Psoas muscle (tissue), 8 donors: ENCODE measurements at regions of chr10 and their contacts with region 1.

Region 1: DNA sequence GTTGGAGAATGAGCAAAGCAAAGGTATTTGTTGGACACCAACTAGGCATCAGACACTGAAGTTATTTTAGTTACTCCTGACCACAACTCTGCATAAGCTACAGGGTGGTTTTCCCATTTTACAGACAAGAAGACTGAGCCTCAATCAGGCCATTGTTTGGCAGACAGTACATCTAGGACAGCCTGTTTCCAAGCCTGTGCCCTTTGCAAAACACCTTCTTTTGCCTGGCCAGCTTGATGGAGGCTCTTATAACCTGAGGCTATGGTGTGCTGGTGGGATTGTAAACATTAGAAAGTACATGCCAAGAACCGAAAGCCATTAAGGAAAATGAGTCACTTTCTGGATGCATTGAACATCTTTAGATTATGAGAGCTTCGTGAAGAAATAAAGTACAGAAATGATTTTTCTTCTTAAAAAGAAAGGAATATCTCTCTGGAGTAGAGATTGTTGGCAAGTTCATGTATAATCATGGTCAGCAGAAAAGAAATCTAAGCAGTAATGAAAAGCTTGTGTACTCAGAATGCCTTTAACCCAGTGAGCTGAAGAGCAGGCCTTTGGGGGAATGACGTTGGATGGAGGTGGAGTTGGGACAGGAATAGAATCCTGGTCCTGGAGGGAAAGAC is 140.6 kb downstream of the KIAA1217 start:
- DNase-seq: no peak
- ATAC-seq: peak in 2 of 4 donors; percentile 10 to 27
- H3K4me3 ChIP-seq: no peak overlapping the region
- H3K27ac ChIP-seq: peak overlapping the region; percentile 58
- H3K4me1 ChIP-seq: peaks cover 39% of the 10 kb centered on the region
- H3K27me3 ChIP-seq: no peaks in the 10 kb centered on the region
- CTCF ChIP-seq: no peak

Region 2: DNA sequence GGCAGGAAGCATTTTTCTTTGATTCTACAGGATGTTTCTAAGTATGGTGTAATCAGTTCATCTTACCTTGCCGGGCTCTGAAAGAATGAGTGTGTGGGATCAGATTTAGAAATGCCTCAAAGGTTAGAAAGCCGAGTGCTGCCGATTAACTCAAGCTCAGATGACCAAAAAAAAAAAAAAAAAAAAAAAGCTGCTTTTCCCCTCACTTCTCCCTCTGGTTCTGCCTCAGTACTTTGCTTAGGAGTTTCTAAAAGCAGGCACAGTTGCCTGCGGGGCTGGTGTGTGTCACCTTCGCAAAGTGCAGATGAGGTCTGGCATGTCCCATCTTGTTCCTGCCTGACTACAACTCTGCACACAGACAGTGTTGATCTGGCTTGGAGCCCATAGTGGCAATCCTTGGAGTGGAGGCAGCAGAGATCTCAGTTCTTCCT is 93.6 kb before region 1 on chr10:
- intact Hi-C with region 1: loop called in 1 of 2 experiments (anchors 10 kb)
- DNase-seq: peak; percentile 57 to 78
- ATAC-seq: peak; percentile 69 to 86 (median 74)
- H3K4me3 ChIP-seq: peak overlapping the region; percentile 44
- H3K27ac ChIP-seq: peak overlapping the region; percentile 87
- H3K4me1 ChIP-seq: peaks cover 82% of the 10 kb centered on the region
- H3K27me3 ChIP-seq: no peaks in the 10 kb centered on the region
- CTCF ChIP-seq: no peak

Region 3: DNA sequence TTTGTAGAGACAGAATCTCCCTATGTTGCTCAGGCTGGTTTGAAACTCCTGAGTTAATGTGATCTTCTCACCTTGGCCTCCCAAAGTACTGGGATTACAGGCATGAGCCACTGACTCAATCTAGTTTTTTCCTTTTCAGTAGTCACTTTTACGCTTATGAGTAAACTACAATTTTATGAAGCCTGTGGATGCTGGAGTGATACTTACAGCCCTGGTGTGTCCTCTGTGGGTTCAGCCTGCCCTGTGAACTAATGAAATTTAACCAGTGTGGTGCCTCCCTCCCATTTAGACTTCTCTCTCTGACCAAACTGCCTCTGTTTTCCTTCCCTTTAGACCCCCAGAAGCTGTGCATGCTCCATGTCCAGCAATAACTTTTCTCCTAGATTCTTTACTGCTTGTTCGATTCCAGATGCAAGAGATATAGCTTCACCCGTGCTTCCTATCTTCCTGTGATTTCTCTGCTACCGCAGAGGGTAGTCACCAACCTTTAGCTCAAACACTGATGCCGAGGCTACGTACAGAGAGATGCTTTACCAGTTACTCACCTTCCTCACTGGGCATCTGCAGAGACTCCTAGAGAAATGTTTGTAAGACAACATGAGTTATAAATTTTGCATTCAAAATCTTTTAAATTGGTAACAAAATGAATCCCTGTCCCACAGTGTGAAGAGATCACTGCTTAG is 49.8 kb before region 1 on chr10:
- intact Hi-C with region 1: loop called in 1 of 2 experiments (anchors 10 kb)
- DNase-seq: no peak
- ATAC-seq: peak; percentile 32 to 68 (median 46)
- H3K4me3 ChIP-seq: no peak overlapping the region
- H3K27ac ChIP-seq: peak overlapping the region; percentile 30
- H3K4me1 ChIP-seq: peaks cover 14% of the 10 kb centered on the region
- H3K27me3 ChIP-seq: no peaks in the 10 kb centered on the region
- CTCF ChIP-seq: no peak